ENCODE measurements at regions of chr10 and their contacts with region 1.

Region 1: GRCh38 chr10:16777473-16778370 is 39.5 kb downstream of the RSU1 start:
- DNase-seq: no peak
- ATAC-seq: peak; percentile 64
- H3K4me3 ChIP-seq: no peak overlapping the region
- H3K27ac ChIP-seq: peak overlapping the region in 1 of 2 donors; percentile 57
- H3K4me1 ChIP-seq: peaks cover 0 to 5% of the 10 kb centered on the region in 2 donors
- H3K27me3 ChIP-seq: no peaks in the 10 kb centered on the region

Region 2: DNA sequence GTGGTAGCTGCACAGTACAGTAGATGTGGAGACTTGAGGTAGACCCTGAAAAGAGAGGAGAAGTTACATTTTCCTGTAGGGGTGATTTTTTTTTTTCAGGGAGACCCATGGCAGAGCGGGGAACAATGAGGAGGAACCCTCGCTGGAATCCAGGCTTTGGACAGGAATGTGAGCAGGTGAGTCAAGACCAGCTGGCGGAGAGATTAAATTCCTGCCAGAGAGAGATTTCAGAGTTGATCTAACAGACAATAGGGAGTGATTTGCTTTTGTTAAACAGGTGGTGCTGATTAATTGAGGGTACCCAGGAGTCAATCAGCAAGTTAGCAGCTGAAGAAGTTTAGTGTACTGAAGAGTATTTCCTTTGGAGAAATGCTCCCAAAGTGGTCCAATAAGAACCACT is 875.8 kb before region 1 on chr10:
- intact Hi-C with region 1: loop called (anchors 5 to 10 kb)
- DNase-seq: no peak
- ATAC-seq: no peak
- H3K4me3 ChIP-seq: no peak overlapping the region
- H3K27ac ChIP-seq: no peak overlapping the region
- H3K4me1 ChIP-seq: no peaks in the 10 kb centered on the region
- H3K27me3 ChIP-seq: no peaks in the 10 kb centered on the region

Region 3: GRCh38 chr10:16436758-16437539 is 340.8 kb before region 1 on chr10 and contains the start of gene PTER:
- intact Hi-C with region 1: loop called in 1 of 2 experiments (anchors 10 kb)
- DNase-seq: peak; percentile 98 to 99
- ATAC-seq: peak; percentile 99
- H3K4me3 ChIP-seq: peak within 1 kb of the TSS; percentile 39 to 81
- H3K27ac ChIP-seq: peak within 1 kb of the TSS in 1 of 2 donors; percentile 92
- H3K4me1 ChIP-seq: no peaks in the 10 kb centered on the region
- H3K27me3 ChIP-seq: no peaks in the 10 kb centered on the region
- total RNA-seq, gene PTER: 6.7 to 11.6 TPM